GM12878 (cell line): ENCODE measurements at regions of chr18 and their contacts with region 1.

Region 1: DNA sequence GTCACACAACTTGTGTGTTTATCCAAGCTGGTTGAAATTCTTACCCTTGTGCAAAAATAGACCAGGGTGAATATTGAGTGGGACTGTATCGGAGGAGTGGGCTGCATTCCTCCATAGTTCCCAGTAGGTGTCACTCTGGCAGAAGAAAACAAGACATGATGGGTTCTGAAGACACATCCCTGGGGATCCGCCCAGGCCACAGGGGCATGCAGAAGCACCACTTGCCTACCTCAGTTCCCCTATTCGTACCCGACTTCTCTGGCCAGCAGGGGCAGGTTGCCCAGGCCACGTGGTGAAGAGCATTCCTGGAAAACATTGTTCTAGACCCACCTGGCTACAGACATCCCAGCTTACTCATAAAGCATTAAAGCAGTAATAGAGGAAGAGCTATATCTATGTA is 168.2 kb downstream of the FAM210A start:
- DNase-seq: no peak
- ATAC-seq: peak; percentile 71
- H3K4me3 ChIP-seq: no peak overlapping the region
- H3K27ac ChIP-seq: no peak overlapping the region
- H3K4me1 ChIP-seq: peaks cover 17% of the 10 kb centered on the region
- H3K27me3 ChIP-seq: no peaks in the 10 kb centered on the region; a peak in 1 of 4 replicates
- CTCF ChIP-seq: peak; percentile 79 to 91 (median 85)
- EP300 ChIP-seq: no peak
- POLR2A ChIP-seq: no peak
- RAD21 ChIP-seq: peak; percentile 94

Region 2: GRCh38 chr18:12883684-12884405 is 674.3 kb before region 1 on chr18 and contains the start of gene PTPN2:
- CTCF ChIA-PET with region 1: no interaction called
- POLR2A ChIA-PET with region 1: no interaction called
- RAD21 ChIA-PET with region 1: no interaction called
- SMC1A ChIA-PET with region 1: no interaction called
- in situ Hi-C with region 1: no loop called
- intact Hi-C with region 1: loop called (anchors 5 kb)
- DNase-seq: peak; percentile 77
- ATAC-seq: peak; percentile 74
- H3K4me3 ChIP-seq: peak within 1 kb of the TSS; percentile 85
- H3K27ac ChIP-seq: peak within 1 kb of the TSS; percentile 97
- H3K4me1 ChIP-seq: peaks cover 36% of the 10 kb centered on the region
- H3K27me3 ChIP-seq: no peaks in the 10 kb centered on the region
- CTCF ChIP-seq: no peak
- EP300 ChIP-seq: peak in 1 of 2 experiments; percentile 56; a peak in 2 of 4 replicates
- POLR2A ChIP-seq: peak; percentile 98
- RAD21 ChIP-seq: no peak
- polyA plus RNA-seq, gene PTPN2: 54.9 to 57.9 TPM

Region 3: DNA sequence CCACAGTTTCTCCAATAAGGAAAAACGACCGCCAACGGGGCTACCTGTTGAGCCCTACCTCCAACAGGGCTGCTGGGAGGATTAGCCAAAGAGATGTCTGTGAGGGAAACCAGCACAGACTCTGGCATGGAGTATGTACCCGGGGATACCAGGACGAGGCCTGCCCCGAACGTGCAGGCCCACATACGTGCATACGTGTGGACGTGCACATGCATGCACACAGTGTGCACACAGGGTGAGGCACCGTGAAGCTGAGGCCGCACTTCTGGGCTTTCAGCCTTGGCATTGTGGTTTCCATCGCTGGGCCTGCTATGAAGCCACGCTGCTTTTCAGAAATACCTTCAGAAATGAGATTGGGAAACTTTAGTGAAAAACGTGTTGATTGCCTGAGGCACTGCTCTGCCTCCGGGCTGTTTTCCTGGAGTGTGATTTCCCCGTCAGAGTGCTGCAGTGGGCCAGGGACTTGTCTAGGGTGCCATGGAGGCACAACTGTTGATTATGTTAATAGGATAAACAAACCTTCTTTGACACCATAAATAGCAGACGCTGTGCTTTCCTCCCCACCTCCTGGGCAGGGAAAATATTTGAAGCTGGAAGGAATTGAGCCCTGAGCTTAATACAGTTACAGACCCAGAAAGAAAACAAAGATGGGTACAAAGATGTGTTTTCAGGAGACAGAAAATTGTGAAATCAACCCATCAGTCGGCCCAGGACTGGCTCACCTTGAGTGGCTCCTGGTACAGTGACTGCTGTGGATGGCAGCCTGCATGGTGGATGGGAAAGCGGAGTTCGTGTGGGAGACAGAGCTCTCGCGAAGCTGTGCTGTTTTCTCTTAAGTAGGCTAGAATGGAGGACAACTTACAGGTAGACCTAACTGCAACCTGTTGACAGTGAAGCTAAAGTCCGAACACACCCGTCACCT is 14.1 kb before region 1 on chr18:
- CTCF ChIA-PET with region 1: interaction called, 29 read pairs
- POLR2A ChIA-PET with region 1: no interaction called
- RAD21 ChIA-PET with region 1: interaction called, 10 read pairs
- SMC1A ChIA-PET with region 1: interaction called, 22 read pairs
- in situ Hi-C with region 1: no loop called
- intact Hi-C with region 1: no loop called
- DNase-seq: no peak
- ATAC-seq: no peak
- H3K4me3 ChIP-seq: no peak overlapping the region
- H3K27ac ChIP-seq: no peak overlapping the region
- H3K4me1 ChIP-seq: peaks cover 3% of the 10 kb centered on the region
- H3K27me3 ChIP-seq: no peaks in the 10 kb centered on the region
- CTCF ChIP-seq: no peak
- EP300 ChIP-seq: no peak
- POLR2A ChIP-seq: no peak
- RAD21 ChIP-seq: no peak

Region 4: DNA sequence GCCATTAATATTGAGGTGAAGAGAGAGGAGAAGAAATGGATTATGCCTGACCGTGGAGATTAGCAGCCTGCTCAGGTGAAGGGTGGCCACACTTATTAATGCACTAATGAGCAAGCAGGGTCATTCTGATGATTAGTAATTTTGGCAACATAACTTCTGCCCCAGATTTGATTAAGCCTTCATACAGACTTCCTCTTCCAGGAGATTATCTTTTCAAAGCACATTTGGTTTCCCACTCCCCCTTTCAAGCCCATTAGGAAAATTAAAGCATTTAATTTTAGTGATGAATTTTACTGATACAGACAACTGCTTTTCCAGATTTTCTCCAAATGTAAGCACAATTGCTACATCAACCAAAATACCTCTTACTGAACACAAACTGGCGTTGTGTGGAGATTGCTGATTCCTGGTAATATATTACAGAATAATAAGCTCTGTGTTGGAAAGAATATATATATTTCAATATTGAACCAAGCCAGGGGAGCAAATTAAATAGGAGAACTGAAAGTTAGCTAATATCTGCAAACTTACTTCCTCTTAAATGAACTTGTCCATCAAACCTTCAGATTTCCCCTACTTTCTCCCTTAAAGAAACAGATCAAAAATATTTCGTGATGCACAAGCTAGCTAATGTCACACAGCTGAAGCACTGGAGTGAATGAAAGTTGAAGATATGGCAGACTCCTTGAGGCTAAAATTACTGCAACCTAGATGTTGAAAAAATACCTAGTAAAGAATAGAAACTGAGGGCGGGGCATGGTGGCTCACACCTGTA is 27.4 kb after region 1 on chr18:
- CTCF ChIA-PET with region 1: interaction called, 24 read pairs
- POLR2A ChIA-PET with region 1: interaction called, 51 read pairs
- RAD21 ChIA-PET with region 1: interaction called, 100 read pairs
- SMC1A ChIA-PET with region 1: interaction called, 93 read pairs
- in situ Hi-C with region 1: no loop called
- intact Hi-C with region 1: no loop called
- DNase-seq: no peak
- ATAC-seq: peak; percentile 66
- H3K4me3 ChIP-seq: no peak overlapping the region
- H3K27ac ChIP-seq: peak overlapping the region; percentile 54
- H3K4me1 ChIP-seq: peaks cover 29% of the 10 kb centered on the region
- H3K27me3 ChIP-seq: no peaks in the 10 kb centered on the region
- CTCF ChIP-seq: no peak
- EP300 ChIP-seq: peak; percentile 15 to 46; a peak in 3 of 4 replicates
- POLR2A ChIP-seq: no peak
- RAD21 ChIP-seq: no peak

Region 5: GRCh38 chr18:13611601-13612195 is 53.6 kb after region 1 on chr18:
- CTCF ChIA-PET with region 1: interaction called, 235 read pairs
- POLR2A ChIA-PET with region 1: interaction called, 170 read pairs
- RAD21 ChIA-PET with region 1: interaction called, 337 read pairs
- SMC1A ChIA-PET with region 1: interaction called, 372 read pairs
- in situ Hi-C with region 1: no loop called
- intact Hi-C with region 1: loop called (anchors 1 kb)
- DNase-seq: no peak
- ATAC-seq: peak; percentile 0
- H3K4me3 ChIP-seq: peak overlapping the region; percentile 73
- H3K27ac ChIP-seq: peak overlapping the region; percentile 84
- H3K4me1 ChIP-seq: peaks cover 75% of the 10 kb centered on the region
- H3K27me3 ChIP-seq: no peaks in the 10 kb centered on the region
- CTCF ChIP-seq: no peak
- EP300 ChIP-seq: no peak
- POLR2A ChIP-seq: no peak
- RAD21 ChIP-seq: no peak

Region 6: DNA sequence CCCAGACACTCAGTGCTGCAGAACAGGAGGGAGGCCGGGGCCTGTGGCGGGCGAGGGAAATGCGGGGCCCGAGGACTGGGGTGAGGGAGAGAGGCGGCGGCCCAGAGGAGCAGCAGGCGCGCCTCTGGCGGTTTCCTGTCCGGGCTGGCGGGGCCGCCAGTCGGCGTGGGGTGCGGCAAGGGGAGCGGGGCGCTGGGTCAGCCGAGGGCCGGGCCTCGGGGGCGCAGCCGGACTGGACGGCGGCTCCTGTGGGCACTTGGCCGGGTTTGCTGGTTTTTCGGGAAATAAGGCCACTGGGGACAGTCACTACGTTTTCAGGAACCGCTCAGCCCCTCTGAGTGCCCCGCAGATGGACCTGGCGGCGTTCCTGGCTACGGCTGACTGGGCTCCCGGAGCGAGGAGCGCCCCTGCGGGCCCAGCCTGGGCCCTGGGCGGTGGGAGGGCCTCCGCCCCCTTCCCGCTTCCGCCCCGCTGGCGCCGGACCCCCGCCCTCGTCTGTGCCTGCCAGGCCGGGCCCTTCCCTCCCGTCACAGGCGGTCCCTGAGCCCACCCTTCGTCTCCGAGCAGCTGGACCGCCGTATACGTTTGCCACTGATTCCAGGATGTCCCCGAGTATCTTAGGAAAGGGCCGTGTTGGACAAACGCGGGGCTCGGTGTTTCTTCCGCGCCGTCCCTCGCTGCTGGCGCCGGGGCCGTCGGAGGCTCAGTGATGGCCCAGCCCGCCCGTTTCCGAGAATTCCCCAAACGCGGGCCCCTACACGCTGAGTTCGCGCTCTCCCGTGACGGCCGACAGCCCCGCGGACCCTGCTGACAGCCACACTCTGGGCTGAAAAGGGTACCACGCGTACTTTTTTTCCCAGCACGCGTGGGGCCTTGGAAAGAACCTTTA is 83.7 kb after region 1 on chr18:
- CTCF ChIA-PET with region 1: interaction called, 10 read pairs
- POLR2A ChIA-PET with region 1: no interaction called
- RAD21 ChIA-PET with region 1: interaction called, 3 read pairs
- SMC1A ChIA-PET with region 1: interaction called, 9 read pairs
- in situ Hi-C with region 1: no loop called
- intact Hi-C with region 1: no loop called
- DNase-seq: no peak
- ATAC-seq: no peak
- H3K4me3 ChIP-seq: no peak overlapping the region
- H3K27ac ChIP-seq: no peak overlapping the region
- H3K4me1 ChIP-seq: no peaks in the 10 kb centered on the region
- H3K27me3 ChIP-seq: no peaks in the 10 kb centered on the region
- CTCF ChIP-seq: no peak
- EP300 ChIP-seq: no peak
- POLR2A ChIP-seq: no peak
- RAD21 ChIP-seq: no peak

Region 7: GRCh38 chr18:13726232-13726971 is 168.3 kb after region 1 on chr18 and contains the starts of genes FAM210A and RNMT:
- CTCF ChIA-PET with region 1: interaction called, 17 read pairs
- POLR2A ChIA-PET with region 1: no interaction called
- RAD21 ChIA-PET with region 1: interaction called, 5 read pairs
- SMC1A ChIA-PET with region 1: interaction called, 14 read pairs
- in situ Hi-C with region 1: loop called (anchors 5 kb)
- intact Hi-C with region 1: loop called (anchors 5 kb)
- DNase-seq: peak; percentile 86
- ATAC-seq: peak; percentile 95
- H3K4me3 ChIP-seq: peak within 1 kb of the TSS; percentile 87
- H3K27ac ChIP-seq: peak within 1 kb of the TSS; percentile 84
- H3K4me1 ChIP-seq: peaks cover 5% of the 10 kb centered on the region
- H3K27me3 ChIP-seq: no peaks in the 10 kb centered on the region
- CTCF ChIP-seq: peak in 2 of 3 experiments; percentile 3 to 43; a peak in 2 of 6 replicates
- EP300 ChIP-seq: peak; percentile 43; a peak in 2 of 4 replicates
- POLR2A ChIP-seq: peak; percentile 89
- RAD21 ChIP-seq: no peak
- polyA plus RNA-seq, gene FAM210A: 10.3 to 12.7 TPM
- polyA plus RNA-seq, gene RNMT: 44.5 to 63.2 TPM